ENCODE measurements at regions of chr3 and their contacts with region 1.

Region 1: DNA sequence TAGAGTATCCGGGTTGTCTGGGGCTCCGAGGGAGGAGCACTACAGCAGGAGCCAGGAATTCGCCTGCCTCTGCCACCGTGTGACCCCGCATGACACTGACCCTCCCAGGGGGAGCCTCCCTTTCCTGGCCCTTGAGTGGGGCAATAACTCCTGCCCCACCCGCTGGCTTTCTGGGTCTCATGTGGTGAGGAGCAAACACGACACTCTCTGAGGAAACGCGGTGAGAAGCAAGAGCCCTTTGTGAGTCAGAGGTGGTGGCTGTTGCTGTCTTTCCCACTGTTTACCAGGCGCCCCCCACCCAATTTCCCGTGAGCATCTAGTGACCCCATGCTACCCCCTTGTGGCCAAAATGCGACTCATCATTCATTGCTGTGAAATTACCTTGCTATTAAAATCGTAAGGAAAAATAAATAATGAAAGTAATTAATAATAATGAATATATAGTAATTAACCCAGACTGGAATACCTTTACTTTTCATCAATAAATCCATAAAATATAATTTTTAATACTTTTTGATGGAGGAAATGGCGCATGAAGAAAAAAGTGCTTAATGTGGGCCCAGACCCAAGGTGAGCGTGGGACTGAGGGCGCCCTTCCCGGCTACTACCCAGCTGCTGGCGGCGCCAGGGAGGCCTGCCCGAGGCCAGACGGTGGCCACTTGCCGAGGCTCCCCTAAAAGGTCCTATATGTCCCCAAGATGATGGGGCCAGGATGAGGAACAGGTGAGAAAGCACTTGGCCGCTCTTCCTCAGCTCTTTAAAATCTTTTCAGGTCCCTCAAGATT is 29.3 kb downstream of the CCNL1 start:
- DNase-seq: peak; percentile 78 to 82 (median 81)
- ATAC-seq: peak; percentile 30 to 75
- H3K4me3 ChIP-seq: no peak overlapping the region
- H3K27ac ChIP-seq: peak overlapping the region; percentile 74
- H3K4me1 ChIP-seq: peaks cover 36% of the 10 kb centered on the region
- H3K27me3 ChIP-seq: no peaks in the 10 kb centered on the region

Region 2: DNA sequence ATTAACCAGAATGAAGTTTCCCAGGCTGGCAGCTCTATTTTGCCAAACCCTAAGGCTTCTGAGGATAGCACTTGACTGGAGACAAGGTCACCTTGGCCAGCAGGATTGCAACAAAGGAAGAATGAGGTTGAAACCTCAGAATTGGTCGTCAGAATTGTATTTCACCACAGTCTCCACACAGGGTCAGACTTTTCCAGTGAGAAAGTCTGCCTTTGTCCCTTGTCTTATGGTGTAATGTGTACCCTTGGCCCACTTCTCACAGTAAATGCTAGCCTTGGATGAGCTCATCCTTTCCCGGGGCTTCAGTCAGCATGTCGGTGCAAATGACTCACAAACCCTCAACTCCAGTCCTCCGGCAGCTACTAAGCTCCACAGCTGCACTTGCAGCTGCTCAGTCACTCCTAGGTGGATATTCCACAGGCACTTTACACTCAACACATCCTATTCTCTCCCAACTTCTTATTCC is 595.5 kb before region 1 on chr3:
- intact Hi-C with region 1: loop called in 3 of 4 experiments (anchors 5 to 10 kb)
- DNase-seq: peak; percentile 68 to 78 (median 71)
- ATAC-seq: peak; percentile 94 to 97
- H3K4me3 ChIP-seq: no peak overlapping the region
- H3K27ac ChIP-seq: peak overlapping the region; percentile 87
- H3K4me1 ChIP-seq: peaks cover 9% of the 10 kb centered on the region
- H3K27me3 ChIP-seq: no peaks in the 10 kb centered on the region

Region 3: GRCh38 chr3:156674046-156674910 is 456.4 kb before region 1 on chr3 and contains the start of gene TIPARP:
- intact Hi-C with region 1: loop called (anchors 5 to 10 kb)
- DNase-seq: peak; percentile 99 to 100 (median 100)
- ATAC-seq: peak; percentile 97
- H3K4me3 ChIP-seq: peak within 1 kb of the TSS; percentile 68
- H3K27ac ChIP-seq: peak within 1 kb of the TSS; percentile 90
- H3K4me1 ChIP-seq: peaks cover 5% of the 10 kb centered on the region
- H3K27me3 ChIP-seq: no peaks in the 10 kb centered on the region
- total RNA-seq, gene TIPARP: 32.8 to 51.3 (median 41.2) TPM

Region 4: DNA sequence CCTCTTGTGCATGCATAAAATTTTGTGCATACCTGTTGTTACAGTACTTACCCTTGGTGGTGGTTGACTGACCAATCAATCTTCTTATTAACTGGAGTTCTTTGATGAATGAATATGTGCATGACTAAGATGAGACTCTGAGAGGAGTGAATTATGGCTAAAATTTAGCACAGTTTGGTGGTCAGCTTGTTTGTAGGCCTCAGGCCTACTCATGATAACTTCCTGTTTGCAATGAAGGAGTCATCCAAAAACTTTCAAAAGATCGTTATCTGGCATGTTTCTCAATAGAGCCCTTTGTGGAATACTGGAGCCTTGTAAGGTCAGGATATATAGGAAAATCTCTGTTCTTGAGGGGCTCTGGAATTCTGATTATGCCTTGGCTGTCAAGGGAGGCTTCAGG is 238.0 kb before region 1 on chr3:
- intact Hi-C with region 1: loop called in 1 of 4 experiments (anchors 10 kb)
- DNase-seq: no peak
- ATAC-seq: no peak
- H3K4me3 ChIP-seq: no peak overlapping the region
- H3K27ac ChIP-seq: no peak overlapping the region
- H3K4me1 ChIP-seq: no peaks in the 10 kb centered on the region
- H3K27me3 ChIP-seq: no peaks in the 10 kb centered on the region

Region 5: GRCh38 chr3:157785102-157785826 is 654.6 kb after region 1 on chr3:
- intact Hi-C with region 1: no loop called
- DNase-seq: no peak
- ATAC-seq: no peak
- H3K4me3 ChIP-seq: no peak overlapping the region
- H3K27ac ChIP-seq: no peak overlapping the region
- H3K4me1 ChIP-seq: no peaks in the 10 kb centered on the region
- H3K27me3 ChIP-seq: no peaks in the 10 kb centered on the region

Measured in right cardiac atrium (tissue), 5 donors.